ENCODE measurements at regions of chr9 and their contacts with region 1.

Region 1: GRCh38 chr9:136728080-136728547 is 14.6 kb downstream of the LCN10 start:
- H3K4me3 Mint-ChIP-seq: peak overlapping the region; percentile 89
- H3K27ac Mint-ChIP-seq: peak overlapping the region; percentile 78
- H3K4me1 Mint-ChIP-seq: peaks cover 55% of the 10 kb centered on the region
- H3K27me3 Mint-ChIP-seq: peaks cover 14% of the 10 kb centered on the region

Region 2: DNA sequence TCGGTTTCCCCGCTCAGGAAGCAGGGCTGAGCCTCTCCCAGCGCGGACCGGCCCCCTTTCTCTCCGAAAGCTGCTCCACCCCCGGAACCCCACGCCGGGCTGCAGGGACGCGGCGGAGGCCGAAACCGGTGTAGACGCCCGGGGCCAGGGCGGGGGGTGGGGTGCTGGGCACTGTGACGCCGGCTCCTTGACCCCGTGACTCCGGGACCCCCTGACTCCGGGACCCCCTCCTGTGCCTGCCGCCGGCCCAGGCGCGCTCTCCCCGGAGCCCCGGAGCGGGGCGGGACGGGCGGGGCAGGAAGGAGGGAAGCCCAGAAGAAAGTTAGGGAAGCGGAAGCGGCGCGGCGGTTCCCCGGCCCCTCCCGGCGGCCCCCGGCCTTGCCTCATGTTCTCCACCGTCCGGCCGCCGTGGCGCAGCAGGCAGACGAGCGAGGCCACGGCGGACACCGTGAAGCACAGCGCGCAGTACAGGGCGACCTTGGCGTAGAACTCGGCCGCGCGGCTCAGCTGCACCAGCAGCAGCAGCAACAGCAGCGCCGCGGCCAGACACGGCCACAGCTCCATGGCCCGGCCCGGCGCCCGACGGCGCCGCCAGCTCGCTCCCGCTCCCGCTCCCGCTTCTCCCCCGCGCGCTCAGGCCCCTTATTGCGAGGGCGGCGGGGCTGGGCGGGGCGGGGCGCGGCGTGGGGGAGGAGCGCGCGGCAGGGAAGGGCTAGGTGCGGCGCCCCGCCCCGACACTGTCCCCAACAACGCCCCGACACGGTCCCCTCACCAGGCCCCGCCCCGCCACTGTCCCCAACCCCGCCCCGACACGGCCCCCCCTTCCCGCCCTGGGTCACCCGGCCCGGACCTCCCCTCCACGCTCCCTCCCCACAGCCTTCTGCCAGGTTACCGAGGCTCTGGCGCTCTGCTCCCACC is 41.1 kb before region 1 on chr9 and contains the start of gene AGPAT2:
- intact Hi-C with region 1: loop called (anchors 5 kb)
- H3K4me3 Mint-ChIP-seq: peak within 1 kb of the TSS; percentile 83
- H3K27ac Mint-ChIP-seq: peak within 1 kb of the TSS; percentile 82
- H3K4me1 Mint-ChIP-seq: peaks cover 58% of the 10 kb centered on the region
- H3K27me3 Mint-ChIP-seq: peaks cover 6% of the 10 kb centered on the region

Region 3: GRCh38 chr9:136711751-136712689 is 16.1 kb before region 1 on chr9 and contains the start of gene DIPK1B:
- intact Hi-C with region 1: no loop called
- H3K4me3 Mint-ChIP-seq: peak within 1 kb of the TSS; percentile 61
- H3K27ac Mint-ChIP-seq: no peak within 1 kb of the TSS
- H3K4me1 Mint-ChIP-seq: peaks cover 14% of the 10 kb centered on the region
- H3K27me3 Mint-ChIP-seq: peaks cover 76% of the 10 kb centered on the region

Region 4: GRCh38 chr9:136769710-136770191 is 41.6 kb after region 1 on chr9:
- intact Hi-C with region 1: no loop called
- H3K4me3 Mint-ChIP-seq: no peak overlapping the region
- H3K27ac Mint-ChIP-seq: no peak overlapping the region
- H3K4me1 Mint-ChIP-seq: peaks cover 11% of the 10 kb centered on the region
- H3K27me3 Mint-ChIP-seq: peaks cover 36% of the 10 kb centered on the region

Measured in dendritic cell treated with granulocyte-macrophage colony-stimulating factor and Interleukin-4, amounts not matched to agents 40 ng/mL and 50 ng/mL, for 4 days (primary cell).